ENCODE measurements at regions of chr10 and their contacts with region 1.

Region 1: GRCh38 chr10:26448706-26449435 is 10.7 kb downstream of the APBB1IP start:
- DNase-seq: peak; percentile 76
- ATAC-seq: peak; percentile 34
- H3K4me3 Mint-ChIP-seq: peak overlapping the region; percentile 54
- H3K27ac Mint-ChIP-seq: peak overlapping the region; percentile 89
- H3K4me1 Mint-ChIP-seq: peaks cover 86% of the 10 kb centered on the region
- H3K27me3 Mint-ChIP-seq: no peaks in the 10 kb centered on the region

Region 2: DNA sequence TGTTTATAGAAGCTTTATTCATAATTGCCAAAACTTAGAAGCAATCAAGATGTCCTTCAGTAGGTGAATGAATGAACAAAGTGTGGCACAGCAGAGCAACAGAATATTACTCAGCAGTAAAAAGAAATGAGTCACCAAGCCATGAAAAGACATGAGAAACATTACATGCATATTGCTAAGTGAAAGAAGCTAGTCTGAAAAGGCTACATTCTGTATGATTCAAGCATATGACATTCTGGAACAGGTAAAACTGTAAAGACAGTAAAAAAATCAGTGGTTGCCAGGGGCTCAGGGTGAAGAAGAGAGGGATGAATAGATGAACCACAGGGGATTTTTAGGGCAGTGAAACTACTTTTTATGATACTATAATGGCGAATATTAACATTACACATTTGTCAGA is 91.7 kb before region 1 on chr10:
- CTCF ChIA-PET with region 1: no interaction called
- POLR2A ChIA-PET with region 1: no interaction called
- intact Hi-C with region 1: loop called in 1 of 2 experiments (anchors 1 kb)
- DNase-seq: peak; percentile 16
- ATAC-seq: peak; percentile 97
- H3K4me3 Mint-ChIP-seq: no peak overlapping the region
- H3K27ac Mint-ChIP-seq: peak overlapping the region; percentile 9
- H3K4me1 Mint-ChIP-seq: peaks cover 13% of the 10 kb centered on the region
- H3K27me3 Mint-ChIP-seq: no peaks in the 10 kb centered on the region

Region 3: GRCh38 chr10:26430641-26431164 is 18.2 kb before region 1 on chr10:
- CTCF ChIA-PET with region 1: no interaction called
- POLR2A ChIA-PET with region 1: no interaction called
- intact Hi-C with region 1: loop called (anchors 1 to 2 kb)
- DNase-seq: peak; percentile 46
- ATAC-seq: peak; percentile 97
- H3K4me3 Mint-ChIP-seq: peak overlapping the region; percentile 43
- H3K27ac Mint-ChIP-seq: peak overlapping the region; percentile 92
- H3K4me1 Mint-ChIP-seq: peaks cover 29% of the 10 kb centered on the region
- H3K27me3 Mint-ChIP-seq: no peaks in the 10 kb centered on the region

Region 4: GRCh38 chr10:26437637-26438461 is 11.0 kb before region 1 on chr10 and contains the start of gene APBB1IP:
- CTCF ChIA-PET with region 1: no interaction called
- POLR2A ChIA-PET with region 1: no interaction called
- intact Hi-C with region 1: loop called in 1 of 2 experiments (anchors 1 kb)
- DNase-seq: peak; percentile 73
- ATAC-seq: peak; percentile 56
- H3K4me3 Mint-ChIP-seq: peak within 1 kb of the TSS; percentile 89
- H3K27ac Mint-ChIP-seq: peak within 1 kb of the TSS; percentile 97
- H3K4me1 Mint-ChIP-seq: peaks cover 49% of the 10 kb centered on the region
- H3K27me3 Mint-ChIP-seq: no peaks in the 10 kb centered on the region
- total RNA-seq, gene APBB1IP: 53.3 to 66.4 TPM

Region 5: DNA sequence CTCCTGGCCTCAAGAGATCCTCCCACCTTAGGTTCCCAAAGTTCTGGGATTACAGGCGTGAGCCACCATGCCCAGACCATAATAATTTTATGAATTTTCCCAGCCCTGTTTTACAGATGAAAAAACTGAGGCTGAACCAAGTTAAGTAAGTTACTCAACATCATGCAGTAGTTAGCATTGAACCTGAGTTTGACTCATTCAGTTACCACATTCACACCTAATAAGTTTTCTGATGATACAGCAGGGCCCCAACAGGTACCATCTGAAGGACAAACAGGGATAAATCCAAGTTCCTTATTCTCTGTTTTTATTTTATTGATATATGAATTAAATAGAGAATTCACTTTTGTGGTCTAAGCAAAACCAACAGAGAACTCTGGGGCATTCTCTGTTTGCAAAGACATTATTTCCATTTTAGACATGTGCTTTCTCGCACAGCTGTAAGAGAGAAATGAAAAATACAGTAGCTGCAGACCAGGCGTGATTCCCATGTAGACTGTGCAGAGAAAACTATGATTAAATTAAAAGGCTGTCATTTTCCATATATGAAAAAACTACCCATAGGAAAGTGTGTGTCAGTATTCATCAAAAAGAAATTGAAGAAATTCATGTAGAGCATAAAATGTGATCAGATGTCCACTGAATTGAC is 15.9 kb after region 1 on chr10:
- CTCF ChIA-PET with region 1: interaction called, 4 read pairs
- POLR2A ChIA-PET with region 1: interaction called, 3 read pairs
- intact Hi-C with region 1: loop called (anchors 1 kb)
- DNase-seq: no peak
- ATAC-seq: peak; percentile 31
- H3K4me3 Mint-ChIP-seq: no peak overlapping the region
- H3K27ac Mint-ChIP-seq: no peak overlapping the region
- H3K4me1 Mint-ChIP-seq: peaks cover 78% of the 10 kb centered on the region
- H3K27me3 Mint-ChIP-seq: no peaks in the 10 kb centered on the region

Region 6: DNA sequence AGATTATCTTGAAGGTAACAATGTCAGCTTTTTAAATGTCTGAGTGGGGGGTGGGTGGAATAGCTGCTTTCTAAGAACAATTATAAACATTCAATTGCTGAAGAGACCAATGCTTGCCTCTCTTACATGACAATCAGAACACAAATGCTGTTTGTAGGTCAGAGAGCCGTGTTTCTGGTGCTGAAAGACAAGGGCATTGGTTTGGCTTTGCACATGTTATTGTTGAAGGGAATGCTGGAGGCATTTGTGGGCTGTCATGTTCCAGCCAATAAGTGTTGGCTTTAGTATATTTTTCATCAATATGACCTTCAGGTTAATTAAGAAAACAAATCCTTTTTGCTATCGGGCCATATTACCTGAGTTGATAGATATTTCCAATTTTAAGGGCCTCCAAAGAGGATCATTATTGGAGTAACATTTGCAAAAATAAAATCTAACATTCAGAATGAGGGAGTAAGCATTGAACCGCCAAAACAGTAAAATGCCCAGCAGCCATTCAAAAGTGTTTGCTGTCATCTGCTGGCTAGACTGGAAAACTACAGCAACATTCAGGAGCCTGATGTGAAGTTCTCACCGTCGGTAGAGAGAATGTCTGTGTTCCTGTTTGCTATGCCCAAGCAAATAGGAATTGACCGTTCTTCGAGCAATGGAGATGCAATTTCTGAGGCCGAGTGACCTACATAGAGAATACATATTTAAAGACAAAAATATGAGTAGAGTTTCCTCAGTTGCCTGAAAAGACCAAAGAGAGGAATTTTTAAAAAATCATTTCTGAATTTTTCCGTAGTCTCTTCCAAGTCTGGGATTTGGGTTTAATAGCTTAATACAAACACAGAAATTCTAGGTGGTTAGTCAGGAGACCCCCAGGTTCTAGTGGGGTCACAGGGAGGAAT is 108.1 kb after region 1 on chr10:
- CTCF ChIA-PET with region 1: no interaction called
- POLR2A ChIA-PET with region 1: no interaction called
- intact Hi-C with region 1: loop called in 1 of 2 experiments (anchors 10 kb)
- DNase-seq: peak; percentile 44
- ATAC-seq: peak; percentile 53
- H3K4me3 Mint-ChIP-seq: no peak overlapping the region
- H3K27ac Mint-ChIP-seq: no peak overlapping the region
- H3K4me1 Mint-ChIP-seq: peaks cover 5% of the 10 kb centered on the region
- H3K27me3 Mint-ChIP-seq: no peaks in the 10 kb centered on the region

Measured in activated CD4-positive, alpha-beta T cell treated with anti-CD3 and anti-CD28 coated beads for 36 hours (primary cell).